ENCODE measurements at regions of chr2 and their contacts with region 1.

Region 1: DNA sequence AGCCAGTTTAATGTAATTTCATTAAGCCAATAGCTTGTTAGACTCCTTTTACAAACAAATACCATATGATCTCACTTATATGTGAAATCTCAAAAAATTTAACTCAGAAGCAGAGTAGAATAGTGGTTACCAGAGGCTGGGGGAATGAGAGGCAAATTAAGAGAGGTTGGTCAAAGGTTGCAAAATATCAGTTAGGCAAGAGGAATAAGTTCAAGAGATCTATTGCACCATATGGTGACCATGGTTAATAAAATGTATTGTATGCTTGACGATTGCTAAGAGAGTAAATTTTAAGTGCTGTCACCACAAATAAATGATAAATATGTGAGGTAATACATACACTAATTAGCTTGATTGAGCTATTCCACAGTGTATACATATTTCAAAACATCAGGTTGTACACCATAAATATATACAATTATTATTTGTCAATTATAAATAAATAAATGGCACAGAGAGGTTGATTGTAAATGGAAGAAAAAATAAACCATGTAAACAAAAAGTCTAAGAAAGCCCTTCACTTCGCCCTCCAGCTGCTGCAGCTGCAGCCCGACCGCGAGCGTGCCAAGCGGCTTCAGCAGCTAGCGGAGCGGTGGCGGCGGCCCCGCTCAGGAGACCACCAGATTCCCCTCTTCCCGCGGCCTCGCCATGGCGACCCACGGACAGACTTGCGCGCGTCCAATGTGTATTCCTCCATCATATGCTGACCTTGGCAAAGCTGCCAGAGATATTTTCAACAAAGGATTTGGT is 23.0 kb upstream of the ACTR2 start:
- DNase-seq: no peak
- ATAC-seq: no peak
- H3K4me3 ChIP-seq: peak overlapping the region in 1 of 2 experiments; percentile 21; a peak in 2 of 4 replicates
- H3K27ac ChIP-seq: no peak overlapping the region
- H3K4me1 ChIP-seq: no peaks in the 10 kb centered on the region
- H3K27me3 ChIP-seq: peaks cover 4% of the 10 kb centered on the region
- CTCF ChIP-seq: no peak

Region 2: GRCh38 chr2:65103013-65103715 is 101.5 kb before region 1 on chr2:
- CTCF ChIA-PET with region 1: no interaction called
- POLR2A ChIA-PET with region 1: no interaction called
- in situ Hi-C with region 1: no loop called
- intact Hi-C with region 1: no loop called
- DNase-seq: no peak
- ATAC-seq: no peak
- H3K4me3 ChIP-seq: no peak overlapping the region
- H3K27ac ChIP-seq: no peak overlapping the region
- H3K4me1 ChIP-seq: no peaks in the 10 kb centered on the region
- H3K27me3 ChIP-seq: no peaks in the 10 kb centered on the region
- CTCF ChIP-seq: no peak

Region 3: DNA sequence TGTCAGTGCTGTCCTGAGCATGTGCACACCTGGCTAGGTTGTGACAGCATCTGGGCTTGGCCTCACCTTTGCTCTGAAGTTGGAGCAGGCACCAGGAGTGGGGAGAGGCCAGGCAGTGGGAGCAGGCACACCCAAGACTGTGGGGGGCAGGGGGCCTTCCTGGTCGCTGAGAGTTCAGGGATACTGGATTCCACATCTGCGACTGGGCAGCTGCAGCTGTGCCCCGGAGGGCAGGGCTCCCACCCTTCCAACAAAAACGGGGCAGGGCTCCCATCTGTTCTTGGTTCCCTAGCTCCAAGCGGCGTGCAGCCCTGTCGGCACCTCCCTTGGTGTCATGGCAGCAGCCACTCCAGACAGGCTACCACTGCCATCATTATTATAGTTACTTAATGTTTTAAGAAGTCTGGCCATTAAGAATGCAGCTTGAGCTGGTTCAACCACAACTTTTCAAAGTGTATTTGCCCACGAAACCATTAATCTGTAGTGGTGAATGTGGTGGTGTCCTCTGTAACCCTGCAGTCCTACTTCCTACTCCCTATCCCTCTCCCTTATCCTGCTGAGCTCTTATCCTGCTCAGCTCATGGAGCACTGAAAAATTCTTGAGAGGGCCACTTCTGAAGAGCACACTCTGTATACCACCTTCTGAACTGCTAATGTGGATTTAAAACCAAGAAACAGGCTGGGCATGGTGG is 26.7 kb before region 1 on chr2:
- CTCF ChIA-PET with region 1: no interaction called
- POLR2A ChIA-PET with region 1: no interaction called
- in situ Hi-C with region 1: no loop called
- intact Hi-C with region 1: no loop called
- DNase-seq: no peak
- ATAC-seq: no peak
- H3K4me3 ChIP-seq: no peak overlapping the region
- H3K27ac ChIP-seq: no peak overlapping the region
- H3K4me1 ChIP-seq: no peaks in the 10 kb centered on the region
- H3K27me3 ChIP-seq: no peaks in the 10 kb centered on the region
- CTCF ChIP-seq: no peak

Region 4: DNA sequence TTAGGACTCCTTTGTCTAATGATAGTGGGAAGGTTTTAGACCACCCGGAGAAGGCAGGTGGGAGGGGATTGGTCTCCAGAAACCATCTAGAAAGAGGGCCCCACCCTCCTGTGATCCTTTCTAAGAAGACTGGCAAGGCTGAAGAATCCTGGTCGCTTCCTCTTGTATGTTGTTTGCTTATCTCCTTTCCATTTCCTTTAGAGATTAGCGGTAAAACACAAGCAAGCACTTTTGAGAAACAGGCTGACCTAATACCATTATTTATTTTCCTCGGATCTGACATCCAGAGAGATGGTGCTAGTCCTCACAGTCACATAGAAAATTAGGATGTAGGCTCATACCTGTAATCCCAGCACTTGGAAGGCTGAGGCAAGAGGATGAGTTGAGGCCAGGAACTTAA is 273.0 kb after region 1 on chr2:
- CTCF ChIA-PET with region 1: no interaction called
- POLR2A ChIA-PET with region 1: interaction called, 10 read pairs
- in situ Hi-C with region 1: no loop called
- intact Hi-C with region 1: no loop called
- DNase-seq: no peak
- ATAC-seq: no peak
- H3K4me3 ChIP-seq: no peak overlapping the region
- H3K27ac ChIP-seq: no peak overlapping the region
- H3K4me1 ChIP-seq: no peaks in the 10 kb centered on the region
- H3K27me3 ChIP-seq: no peaks in the 10 kb centered on the region
- CTCF ChIP-seq: no peak

Measured in Panc1 (cell line).